GM12878 (cell line): ENCODE measurements at regions of chr2 and their contacts with region 1.

Region 1: DNA sequence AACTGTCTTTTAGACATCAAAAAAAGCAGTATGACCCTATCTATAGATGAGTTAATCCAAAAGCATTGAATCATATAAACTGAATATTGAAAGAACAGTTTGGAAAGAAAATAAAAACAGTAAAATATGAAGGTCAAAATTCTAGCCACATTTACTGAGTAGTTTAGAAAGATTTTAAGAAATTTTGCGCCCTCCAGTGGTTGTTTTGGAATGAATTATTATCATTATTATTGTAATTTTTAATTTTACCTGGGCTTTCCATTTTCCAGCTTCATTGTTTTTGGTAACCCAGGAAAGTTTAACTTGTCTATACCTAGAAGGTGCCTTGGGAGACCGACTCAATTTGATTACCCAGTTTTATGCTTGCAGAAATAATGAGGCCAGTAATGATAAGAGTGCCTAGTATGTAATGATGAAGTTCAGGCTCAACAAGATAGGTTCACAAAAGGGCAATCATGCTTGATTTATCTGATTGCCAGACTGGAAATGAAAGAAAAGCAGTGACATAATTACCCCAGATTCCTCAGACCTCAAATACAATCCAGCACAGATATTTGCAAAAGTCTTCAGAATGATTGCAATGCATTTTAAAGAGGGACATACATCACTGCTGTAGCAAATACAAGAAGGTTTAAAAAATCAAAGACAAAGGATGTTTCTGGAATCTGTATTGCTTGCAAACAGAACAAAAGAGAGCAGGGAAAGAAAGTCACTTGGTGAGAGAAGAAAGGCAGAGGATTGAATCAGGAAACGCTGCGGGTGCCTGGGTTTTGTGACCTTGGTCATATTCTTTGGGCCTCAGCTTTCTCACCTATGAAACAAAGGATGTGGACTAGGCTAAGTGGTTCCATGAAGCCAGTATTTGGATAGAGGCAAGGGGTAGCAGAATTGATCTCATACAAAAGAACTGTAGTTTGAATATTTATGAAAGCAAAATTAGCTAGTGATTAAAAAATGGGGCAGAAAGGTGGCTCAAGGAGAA is 153.8 kb downstream of the MAP2 start:
- DNase-seq: no peak
- ATAC-seq: no peak
- H3K4me3 ChIP-seq: no peak overlapping the region
- H3K27ac ChIP-seq: no peak overlapping the region
- H3K4me1 ChIP-seq: no peaks in the 10 kb centered on the region
- H3K27me3 ChIP-seq: no peaks in the 10 kb centered on the region
- CTCF ChIP-seq: peak; percentile 9 to 33 (median 29); a peak in 2 of 6 replicates
- EP300 ChIP-seq: no peak
- POLR2A ChIP-seq: no peak
- RAD21 ChIP-seq: peak; percentile 28; the same call in 1 of the 2 replicates

Region 2: GRCh38 chr2:208407667-208408066 is 1170.0 kb before region 1 on chr2:
- CTCF ChIA-PET with region 1: no interaction called
- POLR2A ChIA-PET with region 1: no interaction called
- RAD21 ChIA-PET with region 1: no interaction called
- SMC1A ChIA-PET with region 1: no interaction called
- in situ Hi-C with region 1: no loop called
- intact Hi-C with region 1: loop called (anchors 5 kb)
- DNase-seq: no peak
- ATAC-seq: peak; percentile 73
- H3K4me3 ChIP-seq: no peak overlapping the region
- H3K27ac ChIP-seq: no peak overlapping the region
- H3K4me1 ChIP-seq: no peaks in the 10 kb centered on the region
- H3K27me3 ChIP-seq: peaks cover 0 to 4% of the 10 kb centered on the region in 2 experiments; a peak in 3 of 4 replicates
- CTCF ChIP-seq: peak; percentile 15 to 61 (median 23); a peak in 4 of 6 replicates
- EP300 ChIP-seq: no peak
- POLR2A ChIP-seq: no peak
- RAD21 ChIP-seq: peak; percentile 60

Region 3: DNA sequence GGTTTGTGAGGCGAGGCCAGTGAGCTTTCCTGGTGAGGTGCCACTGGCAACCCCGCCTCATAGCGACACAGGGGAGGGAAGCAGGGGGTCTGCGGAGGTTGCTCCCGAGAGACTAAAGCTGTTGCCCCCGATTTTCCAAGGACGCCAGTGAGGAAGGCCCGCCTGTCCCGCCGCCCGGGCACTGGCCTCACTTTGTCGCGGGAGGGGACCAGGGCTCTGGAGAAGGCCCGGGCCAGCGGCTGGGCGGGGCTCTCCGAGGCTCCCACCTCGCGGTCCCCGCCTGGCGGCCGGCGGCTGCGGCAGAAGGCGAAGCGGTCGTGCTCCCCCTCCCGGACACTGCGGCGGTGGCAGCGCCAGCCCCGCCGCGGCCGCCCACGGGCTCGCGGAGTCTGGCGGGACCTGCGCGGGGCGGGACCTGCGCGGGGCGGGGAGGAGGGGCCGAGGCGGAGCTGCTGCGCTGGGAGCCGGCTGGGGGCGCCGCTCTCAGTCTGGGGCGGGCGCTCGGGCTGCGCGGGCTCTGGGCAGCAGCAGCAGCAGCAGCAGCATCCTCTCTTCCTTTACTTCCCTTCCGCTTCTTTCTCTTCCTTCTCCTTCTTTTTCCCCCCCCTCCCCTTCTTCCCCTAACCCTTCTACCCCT is 154.0 kb before region 1 on chr2 and contains the start of gene MAP2:
- CTCF ChIA-PET with region 1: interaction called, 10 read pairs
- POLR2A ChIA-PET with region 1: no interaction called
- RAD21 ChIA-PET with region 1: no interaction called
- SMC1A ChIA-PET with region 1: no interaction called
- in situ Hi-C with region 1: no loop called
- intact Hi-C with region 1: loop called (anchors 5 kb)
- DNase-seq: no peak
- ATAC-seq: peak; percentile 99
- H3K4me3 ChIP-seq: peak within 1 kb of the TSS; percentile 25; the same call in 1 of the 2 replicates
- H3K27ac ChIP-seq: no peak within 1 kb of the TSS
- H3K4me1 ChIP-seq: peaks cover 3% of the 10 kb centered on the region; the same call in 1 of the 2 replicates
- H3K27me3 ChIP-seq: no peaks in the 10 kb centered on the region; a peak in 2 of 4 replicates
- CTCF ChIP-seq: peak; percentile 52 to 86 (median 75)
- EP300 ChIP-seq: no peak
- POLR2A ChIP-seq: no peak
- RAD21 ChIP-seq: no peak
- polyA plus RNA-seq, gene MAP2: not detected

Region 4: GRCh38 chr2:209960676-209961630 is 383.3 kb after region 1 on chr2:
- CTCF ChIA-PET with region 1: no interaction called
- POLR2A ChIA-PET with region 1: no interaction called
- RAD21 ChIA-PET with region 1: no interaction called
- SMC1A ChIA-PET with region 1: no interaction called
- in situ Hi-C with region 1: no loop called
- intact Hi-C with region 1: loop called (anchors 10 kb)
- DNase-seq: no peak
- ATAC-seq: peak; percentile 96
- H3K4me3 ChIP-seq: no peak overlapping the region
- H3K27ac ChIP-seq: no peak overlapping the region
- H3K4me1 ChIP-seq: no peaks in the 10 kb centered on the region
- H3K27me3 ChIP-seq: no peaks in the 10 kb centered on the region
- CTCF ChIP-seq: peak; percentile 58 to 72 (median 72)
- EP300 ChIP-seq: no peak
- POLR2A ChIP-seq: no peak
- RAD21 ChIP-seq: peak; percentile 68

Region 5: DNA sequence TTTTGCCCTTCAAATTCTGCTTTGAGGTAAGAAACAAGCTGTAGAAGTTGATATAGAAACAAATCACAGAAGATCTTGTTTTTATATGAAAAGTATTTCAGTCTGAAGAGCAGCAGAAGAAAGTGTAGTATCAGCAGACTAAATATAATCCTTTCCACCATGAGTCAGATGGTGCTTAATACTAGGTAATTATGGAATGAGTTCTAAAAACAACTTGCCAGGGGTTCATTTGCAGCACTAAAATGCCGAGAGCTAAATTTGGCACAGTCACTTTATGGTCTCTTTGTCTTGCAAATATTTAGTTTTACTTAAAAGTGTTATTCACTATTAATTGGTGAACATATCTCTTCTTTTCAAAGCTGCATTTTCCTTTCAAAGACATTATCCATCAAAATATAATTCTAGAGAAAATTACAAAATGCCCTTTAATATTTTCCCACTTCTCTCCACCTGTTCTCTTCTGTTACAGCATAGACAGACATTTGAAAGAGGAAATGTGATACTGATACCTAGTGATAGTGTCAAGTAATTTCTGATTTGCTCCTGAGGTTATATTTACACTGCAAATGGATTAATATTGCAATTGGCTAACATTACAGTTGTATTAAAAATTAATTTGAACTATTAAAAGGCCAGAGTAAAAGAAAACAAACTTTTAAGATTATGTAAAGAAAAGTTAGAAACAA is 732.0 kb after region 1 on chr2:
- CTCF ChIA-PET with region 1: no interaction called
- POLR2A ChIA-PET with region 1: no interaction called
- RAD21 ChIA-PET with region 1: no interaction called
- SMC1A ChIA-PET with region 1: no interaction called
- in situ Hi-C with region 1: no loop called
- intact Hi-C with region 1: no loop called
- DNase-seq: no peak
- ATAC-seq: no peak
- H3K4me3 ChIP-seq: no peak overlapping the region
- H3K27ac ChIP-seq: no peak overlapping the region
- H3K4me1 ChIP-seq: no peaks in the 10 kb centered on the region
- H3K27me3 ChIP-seq: no peaks in the 10 kb centered on the region
- CTCF ChIP-seq: no peak
- EP300 ChIP-seq: no peak
- POLR2A ChIP-seq: no peak
- RAD21 ChIP-seq: no peak